ENCODE measurements at regions of chr11 and their contacts with region 1.

Region 1: GRCh38 chr11:73072901-73073481 is 69.1 kb downstream of the FCHSD2 start:
- DNase-seq: peak in 3 of 5 donors; percentile 1 to 12 (median 9)
- H3K4me3 ChIP-seq: peak overlapping the region in 1 of 2 donors; percentile 22
- H3K4me3 Mint-ChIP-seq: peak overlapping the region in 6 of 8 donors; percentile 4 to 75 (median 40)
- H3K27ac ChIP-seq: no peak overlapping the region
- H3K27ac Mint-ChIP-seq: peak overlapping the region in 6 of 7 donors; percentile 30 to 83 (median 70)
- H3K4me1 ChIP-seq: peaks cover 30% of the 10 kb centered on the region
- H3K4me1 Mint-ChIP-seq: peaks cover 37 to 45% (median 43%) of the 10 kb centered on the region in 4 donors
- H3K27me3 ChIP-seq: no peaks in the 10 kb centered on the region
- H3K27me3 Mint-ChIP-seq: no peaks in the 10 kb centered on the region

Region 2: DNA sequence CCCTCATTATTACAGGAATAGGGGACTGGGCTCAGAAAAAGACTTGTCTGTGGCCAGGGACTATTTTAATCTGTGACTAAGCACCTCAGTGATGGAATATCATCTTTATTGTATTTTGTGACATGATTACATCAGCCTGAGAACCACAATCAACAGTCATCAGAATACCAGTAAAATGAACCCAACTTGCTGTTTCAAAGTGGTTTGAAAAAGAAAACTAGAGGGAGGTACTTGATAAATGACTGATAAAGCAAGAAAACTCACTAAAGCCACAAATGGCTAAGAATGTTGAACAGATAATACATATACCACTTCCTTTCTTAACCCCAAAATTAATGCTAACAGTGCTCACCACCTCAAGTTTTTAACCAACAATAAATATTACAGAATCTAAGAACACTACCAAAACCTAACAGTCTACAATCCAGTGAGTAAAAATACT is 103.1 kb before region 1 on chr11:
- CTCF ChIA-PET with region 1: no interaction called
- POLR2A ChIA-PET with region 1: no interaction called
- intact Hi-C with region 1: no loop called
- DNase-seq: peak in 4 of 5 donors; percentile 17 to 53 (median 30)
- H3K4me3 ChIP-seq: no peak overlapping the region
- H3K4me3 Mint-ChIP-seq: peak overlapping the region in 6 of 8 donors; percentile 16 to 63 (median 54)
- H3K27ac ChIP-seq: no peak overlapping the region
- H3K27ac Mint-ChIP-seq: peak overlapping the region; percentile 5 to 75 (median 30)
- H3K4me1 ChIP-seq: peaks cover 28% of the 10 kb centered on the region
- H3K4me1 Mint-ChIP-seq: peaks cover 26 to 44% (median 32%) of the 10 kb centered on the region in 4 donors
- H3K27me3 ChIP-seq: no peaks in the 10 kb centered on the region
- H3K27me3 Mint-ChIP-seq: no peaks in the 10 kb centered on the region

Region 3: GRCh38 chr11:73034777-73035176 is 38.2 kb before region 1 on chr11:
- CTCF ChIA-PET with region 1: no interaction called
- POLR2A ChIA-PET with region 1: no interaction called
- intact Hi-C with region 1: loop called (anchors 5 kb)
- DNase-seq: no peak
- H3K4me3 ChIP-seq: peak overlapping the region in 1 of 2 donors; percentile 8
- H3K4me3 Mint-ChIP-seq: peak overlapping the region; percentile 47 to 85 (median 79)
- H3K27ac ChIP-seq: peak overlapping the region; percentile 3
- H3K27ac Mint-ChIP-seq: peak overlapping the region; percentile 72 to 89 (median 85)
- H3K4me1 ChIP-seq: peaks cover 35% of the 10 kb centered on the region
- H3K4me1 Mint-ChIP-seq: peaks cover 32 to 48% (median 40%) of the 10 kb centered on the region in 4 donors
- H3K27me3 ChIP-seq: no peaks in the 10 kb centered on the region
- H3K27me3 Mint-ChIP-seq: no peaks in the 10 kb centered on the region

Measured in CD4-positive, alpha-beta memory T cell (primary cell).